Activated CD4-positive, alpha-beta T cell treated with anti-CD3 and anti-CD28 coated beads, Interleukin-2, amount 10 ng/mL, durations not matched to agents 24 days and 14 days (primary cell): ENCODE measurements at regions of chr2 and their contacts with region 1.

Region 1: GRCh38 chr2:27409321-27410073 is at the start of gene PPM1G:
- DNase-seq: peak; percentile 99
- H3K4me3 Mint-ChIP-seq: peak within 1 kb of the TSS; percentile 98
- H3K27ac Mint-ChIP-seq: peak within 1 kb of the TSS; percentile 89
- H3K4me1 Mint-ChIP-seq: peaks cover 30% of the 10 kb centered on the region
- H3K27me3 Mint-ChIP-seq: peaks cover 5% of the 10 kb centered on the region
- total RNA-seq, gene PPM1G: 165 and 167 TPM in 2 replicates

Region 2: GRCh38 chr2:27380626-27381545 is 28.6 kb before region 1 on chr2 and contains the start of gene ZNF513:
- intact Hi-C with region 1: loop called (anchors 2 kb)
- DNase-seq: peak; percentile 97
- H3K4me3 Mint-ChIP-seq: peak within 1 kb of the TSS; percentile 95
- H3K27ac Mint-ChIP-seq: peak within 1 kb of the TSS; percentile 97
- H3K4me1 Mint-ChIP-seq: peaks cover 30% of the 10 kb centered on the region
- H3K27me3 Mint-ChIP-seq: no peaks in the 10 kb centered on the region
- total RNA-seq, gene ZNF513: 11.1 and 13.5 TPM in 2 replicates

Region 3: GRCh38 chr2:27489498-27490397 is 80.3 kb after region 1 on chr2 and contains the start of gene IFT172:
- intact Hi-C with region 1: loop called (anchors 5 kb)
- DNase-seq: peak; percentile 100
- H3K4me3 Mint-ChIP-seq: peak within 1 kb of the TSS; percentile 84
- H3K27ac Mint-ChIP-seq: peak within 1 kb of the TSS; percentile 87
- H3K4me1 Mint-ChIP-seq: peaks cover 20% of the 10 kb centered on the region
- H3K27me3 Mint-ChIP-seq: peaks cover 18% of the 10 kb centered on the region
- total RNA-seq, gene IFT172: 12.4 and 12.9 TPM in 2 replicates

Region 4: DNA sequence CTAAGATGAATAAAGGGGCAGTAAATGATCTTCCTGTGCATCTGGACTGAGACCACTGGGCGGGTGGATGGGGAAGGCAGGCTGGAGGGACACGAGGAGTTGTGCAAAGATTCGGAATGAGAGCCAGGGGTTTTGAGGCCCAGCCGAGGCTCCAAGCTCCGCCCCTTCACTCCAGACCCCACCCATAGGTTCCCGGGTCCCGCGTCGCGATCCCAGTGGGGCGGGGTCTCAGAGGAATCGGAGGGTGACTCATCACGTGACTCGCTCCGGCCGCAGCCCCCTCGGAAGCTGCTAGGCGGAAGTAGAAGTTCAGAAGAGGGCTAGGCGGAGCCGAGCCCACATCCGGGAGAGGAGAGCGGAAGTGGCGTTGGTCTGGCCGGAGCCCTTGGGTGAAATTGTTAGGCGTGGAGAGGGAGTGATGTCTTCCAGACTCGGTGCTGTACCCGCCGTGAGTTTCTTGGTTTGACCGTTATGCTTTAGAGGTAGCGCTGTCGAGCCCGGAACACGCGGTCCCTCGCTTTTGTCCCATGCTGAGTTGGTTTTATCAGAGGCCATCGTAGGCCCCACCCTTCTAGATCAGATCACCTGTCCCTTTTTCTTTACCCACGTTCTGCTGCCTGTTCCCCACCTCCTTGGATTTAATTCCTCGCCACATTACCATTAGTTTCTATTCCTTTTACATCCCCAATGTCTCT is 173.3 kb after region 1 on chr2 and contains the start of gene ZNF512:
- intact Hi-C with region 1: loop called (anchors 5 kb)
- DNase-seq: peak; percentile 94
- H3K4me3 Mint-ChIP-seq: peak within 1 kb of the TSS; percentile 92
- H3K27ac Mint-ChIP-seq: peak within 1 kb of the TSS; percentile 88
- H3K4me1 Mint-ChIP-seq: peaks cover 43% of the 10 kb centered on the region
- H3K27me3 Mint-ChIP-seq: peaks cover 3% of the 10 kb centered on the region
- total RNA-seq, gene ZNF512: 29.0 and 32.7 TPM in 2 replicates

Region 5: DNA sequence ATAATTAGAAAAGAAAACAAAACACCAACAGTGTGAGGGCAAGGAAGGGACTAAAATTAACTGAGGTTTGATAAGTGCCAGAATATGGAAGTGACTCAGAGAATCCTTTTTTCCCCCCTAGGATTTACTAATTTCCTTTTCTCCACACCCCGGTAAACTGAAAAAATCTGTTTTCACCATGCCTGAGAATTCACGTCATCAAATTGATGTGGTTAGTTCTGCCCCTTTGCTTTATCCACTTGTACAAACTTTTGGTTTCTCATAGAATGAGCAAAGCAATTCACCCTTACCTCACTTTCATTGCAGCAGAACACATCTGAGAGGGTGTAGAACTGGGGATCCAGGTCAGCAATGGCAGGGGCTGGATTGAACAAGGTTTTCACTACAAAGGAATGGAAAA is 422.9 kb after region 1 on chr2:
- intact Hi-C with region 1: no loop called
- DNase-seq: no peak
- H3K4me3 Mint-ChIP-seq: no peak overlapping the region
- H3K27ac Mint-ChIP-seq: no peak overlapping the region
- H3K4me1 Mint-ChIP-seq: no peaks in the 10 kb centered on the region
- H3K27me3 Mint-ChIP-seq: no peaks in the 10 kb centered on the region